Posterior vena cava (tissue), 2 donors: ENCODE measurements at regions of chr13 and their contacts with region 1.

Region 1: GRCh38 chr13:31236211-31236786 is 36.5 kb downstream of the B3GLCT start:
- DNase-seq: no peak

Region 2: GRCh38 chr13:29254626-29255370 is 1981.5 kb before region 1 on chr13:
- intact Hi-C with region 1: loop called in 1 of 2 experiments (anchors 10 kb)
- DNase-seq: no peak

Region 3: GRCh38 chr13:31424117-31424729 is 187.9 kb after region 1 on chr13:
- intact Hi-C with region 1: loop called (anchors 5 to 10 kb)
- DNase-seq: peak; percentile 90